AG04450 (cell line): ENCODE measurements at regions of chr10 and their contacts with region 1.

Region 1: DNA sequence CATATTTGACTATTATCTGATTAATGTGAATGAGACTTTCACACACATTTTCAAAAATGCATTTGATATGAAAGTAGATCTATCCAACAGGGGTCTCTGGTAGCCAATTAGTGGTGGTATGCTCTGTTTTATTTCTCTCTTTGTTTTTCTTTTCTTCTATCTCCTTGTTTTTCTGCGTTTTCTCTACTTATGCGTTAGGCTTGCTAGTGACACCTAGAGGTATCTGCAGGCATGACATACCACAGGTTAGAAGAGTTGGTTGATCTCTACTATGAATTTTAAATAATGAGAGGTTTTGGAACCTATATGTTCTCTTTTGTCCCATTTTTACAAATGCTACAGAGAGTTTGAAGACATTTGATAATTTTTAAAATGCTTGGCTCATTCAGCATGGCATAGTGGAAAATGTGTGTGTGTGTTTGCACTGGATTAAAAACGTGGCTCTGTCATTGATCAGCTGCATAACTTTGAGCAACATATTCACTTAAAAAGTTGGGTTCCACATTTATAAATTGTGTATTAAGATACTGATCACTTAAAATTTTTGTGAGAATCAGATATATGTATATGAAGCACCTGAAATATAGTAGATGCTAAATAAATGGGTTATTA is 28.1 kb upstream of the PLXDC2 start:
- DNase-seq: peak; percentile 32
- H3K4me3 ChIP-seq: no peak overlapping the region
- H3K27ac ChIP-seq: no peak overlapping the region
- H3K27me3 ChIP-seq: no peaks in the 10 kb centered on the region
- CTCF ChIP-seq: peak; percentile 97

Region 2: GRCh38 chr10:19629567-19629966 is 158.6 kb before region 1 on chr10:
- CTCF ChIA-PET with region 1: interaction called, 15 read pairs
- POLR2A ChIA-PET with region 1: no interaction called
- DNase-seq: no peak
- H3K4me3 ChIP-seq: no peak overlapping the region
- H3K27ac ChIP-seq: no peak overlapping the region
- H3K27me3 ChIP-seq: no peaks in the 10 kb centered on the region
- CTCF ChIP-seq: peak; percentile 32; the same call in 1 of the 2 replicates

Region 3: DNA sequence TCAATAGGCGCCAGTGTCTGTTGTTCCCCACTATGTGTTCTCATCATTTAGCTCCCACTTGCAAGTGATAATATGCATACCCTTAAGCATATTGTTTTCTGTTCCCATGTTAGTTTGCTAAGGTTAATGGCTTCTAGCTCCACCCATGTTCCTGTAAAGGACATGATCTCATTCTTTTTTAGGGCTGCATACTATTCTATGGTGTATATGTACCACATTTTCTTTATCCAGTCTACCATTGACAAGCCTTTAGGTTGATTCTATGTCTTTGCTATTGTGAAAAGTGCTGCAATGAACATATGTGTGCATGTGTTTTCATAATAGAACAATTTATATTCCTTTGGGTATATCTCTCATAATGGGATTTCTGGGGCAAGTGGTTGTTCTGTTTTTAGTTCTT is 49.7 kb before region 1 on chr10:
- CTCF ChIA-PET with region 1: no interaction called
- POLR2A ChIA-PET with region 1: no interaction called
- DNase-seq: no peak
- H3K4me3 ChIP-seq: no peak overlapping the region
- H3K27ac ChIP-seq: no peak overlapping the region
- H3K27me3 ChIP-seq: no peaks in the 10 kb centered on the region
- CTCF ChIP-seq: no peak

Region 4: DNA sequence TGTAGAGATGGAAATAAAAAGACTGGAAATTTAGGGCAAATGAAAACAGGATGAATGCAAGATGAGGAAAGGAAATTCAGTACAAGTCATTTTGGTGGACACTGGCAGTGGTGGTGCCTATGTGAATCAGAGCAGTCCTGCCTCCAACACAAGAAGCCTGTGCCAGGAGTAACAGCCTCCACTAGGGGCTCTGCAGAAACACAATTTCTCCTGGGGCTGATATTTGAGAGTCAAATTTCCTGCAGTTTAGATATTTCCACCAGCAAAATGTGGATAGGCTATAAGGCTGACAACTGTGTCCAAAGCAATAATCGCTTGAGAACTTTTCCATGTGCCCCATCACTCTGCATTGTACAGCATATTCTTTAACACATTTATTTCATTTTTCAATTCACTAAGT is 23.4 kb after region 1 on chr10:
- CTCF ChIA-PET with region 1: no interaction called
- POLR2A ChIA-PET with region 1: no interaction called
- DNase-seq: no peak
- H3K4me3 ChIP-seq: no peak overlapping the region
- H3K27ac ChIP-seq: no peak overlapping the region
- H3K27me3 ChIP-seq: no peaks in the 10 kb centered on the region
- CTCF ChIP-seq: peak; percentile 70

Region 5: GRCh38 chr10:19930936-19931893 is 143.0 kb after region 1 on chr10:
- CTCF ChIA-PET with region 1: interaction called, 13 read pairs
- POLR2A ChIA-PET with region 1: no interaction called
- DNase-seq: peak; percentile 29
- H3K4me3 ChIP-seq: no peak overlapping the region
- H3K27ac ChIP-seq: peak overlapping the region; percentile 3
- H3K27me3 ChIP-seq: no peaks in the 10 kb centered on the region
- CTCF ChIP-seq: no peak